Panc1 (cell line): ENCODE measurements at regions of chr2 and their contacts with region 1.

Region 1: GRCh38 chr2:105521205-105521604 is 122.4 kb upstream of the FHL2 start:
- DNase-seq: peak; percentile 42
- ATAC-seq: no peak
- H3K4me3 ChIP-seq: no peak overlapping the region
- H3K27ac ChIP-seq: peak overlapping the region; percentile 88
- H3K4me1 ChIP-seq: peaks cover 46% of the 10 kb centered on the region
- H3K27me3 ChIP-seq: no peaks in the 10 kb centered on the region
- CTCF ChIP-seq: peak; percentile 61; the same call in 1 of the 2 replicates

Region 2: DNA sequence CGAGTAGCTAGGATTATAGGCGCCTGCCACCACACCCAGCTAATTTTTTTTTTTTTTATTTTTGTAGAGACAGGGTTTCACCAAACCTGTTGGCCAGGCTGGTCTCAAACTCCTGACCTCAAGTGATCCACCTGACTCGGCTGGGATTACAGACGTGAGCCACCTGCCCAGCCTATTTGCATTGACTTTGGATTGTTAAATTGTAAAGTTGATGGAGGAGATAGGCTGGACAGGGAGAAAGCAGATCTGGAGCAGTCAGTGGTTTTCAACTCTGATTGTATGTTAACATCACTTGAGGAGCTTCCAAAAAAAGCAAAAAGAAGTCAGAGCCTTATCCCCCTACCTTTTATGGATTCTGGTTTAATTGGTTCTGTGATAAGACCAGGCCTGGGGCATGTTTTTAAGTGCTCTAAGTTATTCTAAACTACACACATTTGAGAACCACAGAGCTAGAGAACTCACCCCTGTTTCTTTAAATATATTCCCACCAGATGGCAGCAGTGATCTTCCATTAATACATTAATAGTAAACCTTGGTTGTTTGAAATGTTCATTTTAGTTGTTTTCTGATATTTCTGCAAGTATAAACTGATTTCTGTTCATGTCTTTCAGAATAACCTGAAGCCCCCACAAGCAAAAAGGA is 176.4 kb before region 1 on chr2:
- CTCF ChIA-PET with region 1: interaction called, 12 read pairs
- POLR2A ChIA-PET with region 1: no interaction called
- in situ Hi-C with region 1: no loop called
- intact Hi-C with region 1: loop called (anchors 2 kb)
- DNase-seq: no peak
- ATAC-seq: peak; percentile 87
- H3K4me3 ChIP-seq: no peak overlapping the region
- H3K27ac ChIP-seq: peak overlapping the region; percentile 37; the same call in 1 of the 2 replicates
- H3K4me1 ChIP-seq: 0 out of 2 replicates have a peak, but pooled peaks cover 2% of the 10 kb centered on the region
- H3K27me3 ChIP-seq: no peaks in the 10 kb centered on the region
- CTCF ChIP-seq: peak; percentile 60; the same call in 1 of the 2 replicates

Region 3: GRCh38 chr2:105369747-105370690 is 151.2 kb before region 1 on chr2:
- CTCF ChIA-PET with region 1: interaction called, 3 read pairs
- POLR2A ChIA-PET with region 1: no interaction called
- in situ Hi-C with region 1: no loop called
- intact Hi-C with region 1: loop called (anchors 2 kb)
- DNase-seq: peak; percentile 79
- ATAC-seq: peak; percentile 68
- H3K4me3 ChIP-seq: no peak overlapping the region
- H3K27ac ChIP-seq: peak overlapping the region; percentile 100
- H3K4me1 ChIP-seq: peaks cover 72% of the 10 kb centered on the region
- H3K27me3 ChIP-seq: no peaks in the 10 kb centered on the region
- CTCF ChIP-seq: peak; percentile 92

Region 4: DNA sequence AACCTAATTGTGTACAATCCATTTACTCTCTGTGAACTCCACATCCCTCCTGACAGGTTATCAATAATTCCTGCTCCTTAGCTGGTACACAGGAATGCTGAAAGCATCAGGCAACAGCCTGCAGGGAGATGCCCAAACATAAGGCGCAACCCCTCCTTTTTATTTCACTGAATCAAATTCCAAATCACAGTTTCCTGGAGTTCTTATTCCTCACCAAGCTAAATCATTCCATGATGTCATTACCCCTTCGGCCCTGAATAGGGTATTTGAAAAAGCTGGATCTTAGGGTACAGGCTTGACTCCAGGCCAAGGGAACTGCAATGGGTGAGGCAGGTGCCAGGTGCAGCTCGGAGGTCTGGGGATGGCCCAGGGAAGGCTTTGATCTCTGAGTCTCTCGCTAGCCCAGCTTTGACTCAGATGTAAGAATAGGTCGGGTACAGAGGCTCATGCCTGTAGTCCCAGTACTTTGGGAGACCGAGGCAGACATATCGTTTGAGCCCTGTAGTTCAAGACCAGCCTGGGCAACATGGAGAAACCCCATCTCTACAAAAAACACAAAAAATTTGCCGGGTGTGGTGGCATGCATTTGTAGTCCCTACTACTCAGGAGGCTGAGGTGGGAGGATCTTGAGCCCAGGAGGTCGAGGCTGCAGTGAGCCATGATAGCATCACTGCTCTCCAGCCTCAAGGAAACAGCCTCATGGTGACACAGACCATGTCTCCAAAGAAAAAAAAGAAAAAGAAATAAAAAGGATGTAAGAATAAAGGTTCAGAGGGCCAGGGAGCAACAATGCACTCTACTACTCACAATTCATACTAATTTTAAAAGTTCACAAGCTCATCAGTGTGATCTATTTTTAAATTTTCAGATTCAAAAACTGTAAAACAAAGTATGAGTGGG is 129.2 kb before region 1 on chr2:
- CTCF ChIA-PET with region 1: interaction called, 30 read pairs
- POLR2A ChIA-PET with region 1: interaction called, 9 read pairs
- in situ Hi-C with region 1: no loop called
- intact Hi-C with region 1: loop called (anchors 5 kb)
- DNase-seq: no peak
- ATAC-seq: no peak
- H3K4me3 ChIP-seq: peak overlapping the region in 1 of 2 experiments; percentile 90; a peak in 2 of 4 replicates
- H3K27ac ChIP-seq: peak overlapping the region; percentile 100
- H3K4me1 ChIP-seq: peaks cover 92% of the 10 kb centered on the region
- H3K27me3 ChIP-seq: no peaks in the 10 kb centered on the region
- CTCF ChIP-seq: no peak

Region 5: DNA sequence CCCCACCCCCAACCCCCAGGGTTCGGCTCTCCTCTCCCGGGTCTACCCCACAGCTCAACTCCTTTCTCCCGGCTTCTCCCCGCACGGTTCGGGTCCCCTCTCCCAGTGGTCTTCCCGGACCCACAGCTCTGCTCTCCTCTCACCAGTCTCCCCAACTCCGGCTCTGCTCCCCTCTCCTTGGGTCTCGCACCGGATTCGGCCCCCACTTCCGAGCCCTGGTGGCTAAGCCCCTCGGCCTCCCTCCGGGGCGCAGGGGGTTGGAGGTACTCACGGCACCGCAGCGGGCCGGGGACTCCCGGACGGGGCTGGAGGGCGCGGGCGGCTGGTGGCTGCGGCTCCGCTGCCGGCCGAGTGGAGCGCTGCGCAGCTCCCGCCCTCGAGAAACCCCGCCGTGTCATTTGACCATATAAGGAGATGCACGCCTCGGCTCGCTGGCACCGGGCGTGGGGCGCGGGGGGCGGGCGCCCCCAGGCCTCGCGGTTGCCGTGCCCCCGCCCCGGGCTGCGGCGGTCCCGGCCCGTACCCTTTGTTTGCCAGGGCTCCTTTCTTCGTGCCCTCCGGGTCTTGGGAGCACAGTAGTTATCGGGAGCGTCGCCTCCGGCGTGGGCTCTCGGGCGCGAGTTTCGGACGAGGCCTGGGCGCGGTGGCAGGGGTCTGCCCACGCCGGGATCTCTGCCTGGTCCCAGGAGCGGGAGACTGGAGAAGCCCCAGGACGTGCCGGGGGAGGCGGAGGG is 122.3 kb before region 1 on chr2 and contains the start of gene FHL2:
- CTCF ChIA-PET with region 1: interaction called, 5 read pairs
- POLR2A ChIA-PET with region 1: interaction called, 6 read pairs
- in situ Hi-C with region 1: no loop called
- intact Hi-C with region 1: loop called (anchors 5 kb)
- DNase-seq: no peak
- ATAC-seq: peak; percentile 77
- H3K4me3 ChIP-seq: peak within 1 kb of the TSS; percentile 86 to 90
- H3K27ac ChIP-seq: peak within 1 kb of the TSS; percentile 100
- H3K4me1 ChIP-seq: peaks cover 70% of the 10 kb centered on the region
- H3K27me3 ChIP-seq: no peaks in the 10 kb centered on the region
- CTCF ChIP-seq: peak; percentile 78
- total RNA-seq, gene FHL2: 378 TPM

Region 6: DNA sequence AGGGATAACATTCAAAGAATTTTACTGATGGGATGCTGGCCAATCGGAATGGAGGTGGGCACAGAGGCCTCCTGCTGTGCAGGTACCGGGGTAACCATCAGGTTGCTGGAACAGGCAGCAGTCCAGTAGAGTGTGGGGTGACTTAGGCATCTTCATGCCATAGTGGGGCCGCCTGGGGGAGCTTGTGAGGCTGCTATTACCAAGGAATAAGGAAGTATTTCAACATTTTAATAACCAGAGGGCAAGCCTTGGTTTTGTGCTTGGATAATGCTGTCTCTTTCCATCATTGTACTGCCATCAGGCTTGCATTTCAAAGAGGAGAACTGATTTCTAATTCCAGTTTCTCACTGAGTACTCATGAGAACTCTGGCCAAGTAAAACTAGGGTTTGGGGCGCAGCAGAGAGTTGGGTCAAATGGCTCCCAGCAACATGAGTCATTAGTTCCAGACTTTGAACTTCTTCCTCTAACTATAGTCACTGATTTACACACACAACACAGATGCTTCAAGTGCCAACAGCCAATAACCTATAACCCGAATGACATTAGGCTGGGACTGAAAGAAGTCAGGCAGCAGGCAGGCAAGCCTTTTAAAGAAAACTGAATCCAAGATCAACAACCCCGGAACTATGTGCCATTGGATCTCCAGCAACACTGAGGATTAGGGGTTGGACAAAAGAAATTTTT is 66.3 kb before region 1 on chr2:
- CTCF ChIA-PET with region 1: interaction called, 10 read pairs
- POLR2A ChIA-PET with region 1: no interaction called
- in situ Hi-C with region 1: no loop called
- intact Hi-C with region 1: loop called (anchors 2 kb)
- DNase-seq: peak; percentile 82
- ATAC-seq: peak; percentile 78
- H3K4me3 ChIP-seq: peak overlapping the region in 1 of 2 experiments; percentile 7; a peak in 1 of 4 replicates
- H3K27ac ChIP-seq: peak overlapping the region; percentile 95
- H3K4me1 ChIP-seq: peaks cover 44% of the 10 kb centered on the region
- H3K27me3 ChIP-seq: no peaks in the 10 kb centered on the region
- CTCF ChIP-seq: peak; percentile 73

Region 7: DNA sequence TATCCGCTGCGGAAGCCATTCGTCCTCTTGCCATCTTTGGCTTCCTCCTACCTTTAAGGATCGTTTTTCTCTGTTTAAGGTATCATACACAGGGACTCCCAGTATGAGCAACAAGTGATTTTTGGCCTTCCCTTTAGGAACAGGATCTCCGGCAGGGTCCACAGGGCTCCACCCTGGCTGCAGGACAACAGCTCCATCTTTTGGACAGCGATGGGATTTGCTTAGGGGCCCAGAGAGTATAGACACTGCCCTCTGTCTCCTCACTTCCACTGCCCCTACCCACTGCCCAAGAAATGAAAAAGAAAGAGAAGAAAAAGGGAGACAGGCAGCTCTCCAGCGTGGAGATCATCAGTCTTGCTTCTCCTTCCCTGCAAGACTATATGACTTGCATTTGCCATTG is 448.4 kb after region 1 on chr2:
- CTCF ChIA-PET with region 1: no interaction called
- POLR2A ChIA-PET with region 1: interaction called, 17 read pairs
- in situ Hi-C with region 1: no loop called
- intact Hi-C with region 1: no loop called
- DNase-seq: no peak
- ATAC-seq: peak; percentile 48; the same call in 1 of the 2 replicates
- H3K4me3 ChIP-seq: no peak overlapping the region
- H3K27ac ChIP-seq: no peak overlapping the region
- H3K4me1 ChIP-seq: no peaks in the 10 kb centered on the region
- H3K27me3 ChIP-seq: no peaks in the 10 kb centered on the region
- CTCF ChIP-seq: peak; percentile 58

Region 8: DNA sequence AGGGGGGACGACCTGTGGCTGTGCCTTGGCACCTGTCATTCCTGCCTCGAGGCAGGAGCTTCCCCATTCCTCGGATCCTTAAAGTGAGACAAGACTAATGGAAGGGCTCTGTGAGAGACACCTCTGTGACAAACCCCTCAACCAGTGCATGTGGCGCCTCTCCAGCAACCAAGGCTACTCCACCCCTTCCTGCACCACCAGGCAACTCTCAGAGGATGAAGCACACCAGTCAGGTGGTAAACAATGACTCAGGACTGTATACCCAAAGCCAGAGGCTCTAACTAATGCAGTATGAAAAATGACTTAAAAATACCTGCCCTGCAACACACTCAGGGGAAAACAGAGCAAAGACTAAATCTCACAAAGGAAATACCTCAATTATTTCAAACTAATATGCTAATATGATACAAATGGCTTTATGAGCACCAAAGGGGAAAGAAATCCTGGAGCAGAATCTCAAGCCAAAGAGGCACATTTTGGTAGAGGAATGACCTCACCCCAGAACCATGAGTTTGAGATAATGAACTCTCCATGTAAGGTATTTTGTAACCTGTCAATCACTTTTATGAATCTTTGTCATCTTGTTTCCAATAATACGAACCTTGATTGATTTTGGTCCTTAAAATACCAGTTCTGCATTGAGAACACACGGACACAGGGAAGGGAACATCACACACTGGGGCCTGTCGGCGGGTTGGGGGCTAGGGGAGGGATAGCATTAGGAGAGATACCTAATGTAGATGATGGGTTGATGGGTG is 536.2 kb after region 1 on chr2:
- CTCF ChIA-PET with region 1: no interaction called
- POLR2A ChIA-PET with region 1: no interaction called
- in situ Hi-C with region 1: no loop called
- intact Hi-C with region 1: no loop called
- DNase-seq: no peak
- ATAC-seq: no peak
- H3K4me3 ChIP-seq: no peak overlapping the region
- H3K27ac ChIP-seq: no peak overlapping the region
- H3K4me1 ChIP-seq: no peaks in the 10 kb centered on the region
- H3K27me3 ChIP-seq: 0 out of 2 replicates have a peak, but pooled peaks cover 2% of the 10 kb centered on the region
- CTCF ChIP-seq: no peak